Pancreas (tissue), 10 donors: ENCODE measurements at regions of chr4 and their contacts with region 1.

Region 1: DNA sequence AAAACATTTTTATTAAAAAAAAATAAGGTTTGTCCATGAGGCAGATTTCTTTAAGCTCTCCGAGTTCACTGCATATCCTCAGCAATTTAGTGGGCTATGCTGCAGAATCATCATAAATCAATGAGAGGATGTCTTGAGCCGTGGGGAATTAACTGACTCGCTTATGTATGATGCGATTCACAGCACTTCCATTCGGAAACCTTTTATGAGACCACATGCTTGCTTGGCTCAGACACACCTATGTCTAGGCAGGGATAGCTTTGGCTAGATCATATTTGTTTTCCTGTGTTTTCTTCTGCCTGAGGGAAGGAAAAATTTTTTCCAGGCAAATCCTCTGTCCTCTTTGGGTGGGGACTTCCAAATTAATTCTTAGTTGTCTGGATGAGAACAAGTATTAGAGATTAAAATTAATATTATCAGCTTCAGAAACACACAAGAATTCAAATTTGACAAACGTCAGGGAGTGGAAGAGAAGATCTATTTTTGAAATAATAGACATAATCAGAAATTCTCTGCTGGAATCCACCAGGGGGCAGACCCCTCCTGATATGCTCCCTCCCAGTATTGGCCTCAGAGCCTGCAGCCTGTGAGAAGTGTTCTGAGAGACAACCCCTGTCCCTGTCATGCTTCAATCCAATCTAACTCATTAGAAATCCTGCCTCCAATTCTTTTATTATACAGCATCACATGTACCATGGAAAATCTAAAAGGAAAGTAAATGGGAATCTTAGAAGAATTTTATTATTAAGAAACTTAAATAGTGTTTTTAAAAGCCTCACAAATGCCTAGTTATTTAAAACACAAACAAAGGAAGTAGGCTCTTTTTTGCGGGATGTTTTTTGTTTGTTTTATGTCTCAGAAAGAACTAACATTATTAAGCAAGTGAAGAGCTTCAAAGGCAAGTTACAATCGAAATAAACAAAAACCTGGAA is 345.1 kb upstream of the TACR3 start:
- DNase-seq: peak; percentile 26 to 63 (median 46)
- ATAC-seq: peak; percentile 69 to 98 (median 94)
- H3K4me3 ChIP-seq: no peak overlapping the region
- H3K27ac ChIP-seq: no peak overlapping the region
- H3K4me1 ChIP-seq: no peaks in the 10 kb centered on the region
- H3K27me3 ChIP-seq: no peaks in the 10 kb centered on the region
- CTCF ChIP-seq: peak in 3 of 4 donors; percentile 34 to 52 (median 52)

Region 2: DNA sequence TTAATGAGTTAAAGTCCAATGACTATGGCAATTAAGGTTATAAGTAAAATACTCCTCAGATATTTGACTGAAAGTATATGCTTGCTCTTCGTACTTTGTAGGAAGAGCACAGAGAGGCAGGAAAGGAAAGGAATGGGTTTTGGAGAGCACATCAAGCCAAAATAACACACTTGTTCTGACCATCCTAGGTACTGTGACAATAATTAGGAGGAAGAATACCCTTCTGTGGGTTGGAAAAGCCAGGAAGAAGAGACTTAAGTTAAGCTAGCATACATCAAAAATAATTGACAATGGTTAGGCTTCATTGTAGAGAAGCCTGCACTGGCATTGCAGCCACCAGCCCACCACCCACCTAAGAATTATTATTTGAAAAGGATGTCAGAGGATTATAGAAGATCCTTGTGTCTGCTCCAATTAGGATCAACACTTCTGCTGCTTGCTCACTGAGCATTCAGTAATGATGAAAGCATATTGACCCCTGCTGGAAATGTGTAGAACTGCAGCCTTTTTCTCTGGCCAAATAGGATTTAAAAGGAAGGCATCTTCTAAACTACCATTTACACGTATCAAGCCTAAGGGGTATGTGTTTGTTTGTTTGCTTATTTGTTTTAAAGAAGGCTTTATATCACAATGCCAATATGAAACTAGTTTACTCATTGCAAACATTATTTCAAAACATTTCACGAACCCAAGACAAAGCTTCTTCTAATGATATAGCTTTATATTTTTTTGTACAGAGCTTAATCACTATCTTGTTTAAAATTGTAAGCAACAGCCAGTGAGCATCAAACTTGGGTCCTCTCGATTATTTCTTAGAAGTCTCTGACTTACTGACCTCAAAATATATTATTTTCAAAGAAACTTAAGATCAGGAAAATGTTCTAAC is 795.6 kb after region 1 on chr4:
- intact Hi-C with region 1: loop called in 1 of 3 experiments (anchors 10 kb)
- DNase-seq: peak in 3 of 6 donors; percentile 34 to 66 (median 41)
- ATAC-seq: peak; percentile 66 to 95 (median 89)
- H3K4me3 ChIP-seq: no peak overlapping the region
- H3K27ac ChIP-seq: no peak overlapping the region
- H3K4me1 ChIP-seq: no peaks in the 10 kb centered on the region
- H3K27me3 ChIP-seq: no peaks in the 10 kb centered on the region
- CTCF ChIP-seq: peak; percentile 67 to 76 (median 74)